Activated T-helper 2 cell treated with anti-CD3 and anti-CD28 coated beads, Interferon-gamma antibody, Interleukin-2, Interleukin-4, amounts not matched to agents 10 μg/mL and 5 μg/mL and 100 μg/mL, durations not matched to agents 14 hours and 24 hours and 36 hours (primary cell): ENCODE measurements at regions of chr1 and their contacts with region 1.

Region 1: DNA sequence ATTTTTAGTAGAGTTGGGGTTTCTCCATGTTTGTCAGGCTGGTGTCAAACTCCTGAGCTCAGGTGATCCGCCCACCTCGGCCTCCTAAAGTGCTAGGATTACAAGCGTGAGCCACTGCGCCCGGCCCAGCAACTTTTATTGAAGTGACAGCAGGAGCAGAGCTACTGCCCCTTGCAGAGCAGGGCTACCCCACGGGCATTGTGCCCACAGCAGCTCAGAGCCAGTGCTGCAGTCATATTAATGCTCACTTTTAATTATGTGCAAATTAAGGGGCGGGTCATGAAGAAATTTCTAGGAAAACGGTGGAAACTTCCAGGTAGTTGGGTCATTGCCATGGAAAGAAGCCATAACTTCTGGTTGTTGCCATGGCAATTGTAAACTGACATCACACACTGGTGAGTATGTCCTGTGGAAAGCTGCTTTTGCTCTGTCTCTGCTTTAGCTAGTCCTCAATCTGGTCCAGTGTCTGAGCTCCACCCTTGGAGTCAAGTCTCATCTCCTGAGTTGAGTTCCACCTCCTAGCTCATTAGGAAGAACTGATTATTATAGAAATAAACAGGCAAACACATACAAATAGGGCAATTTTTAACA is 127.3 kb upstream of the ADGRL4 start:
- DNase-seq: no peak
- H3K4me3 Mint-ChIP-seq: no peak overlapping the region
- H3K27ac Mint-ChIP-seq: no peak overlapping the region
- H3K4me1 Mint-ChIP-seq: no peaks in the 10 kb centered on the region
- H3K27me3 Mint-ChIP-seq: no peaks in the 10 kb centered on the region

Region 2: DNA sequence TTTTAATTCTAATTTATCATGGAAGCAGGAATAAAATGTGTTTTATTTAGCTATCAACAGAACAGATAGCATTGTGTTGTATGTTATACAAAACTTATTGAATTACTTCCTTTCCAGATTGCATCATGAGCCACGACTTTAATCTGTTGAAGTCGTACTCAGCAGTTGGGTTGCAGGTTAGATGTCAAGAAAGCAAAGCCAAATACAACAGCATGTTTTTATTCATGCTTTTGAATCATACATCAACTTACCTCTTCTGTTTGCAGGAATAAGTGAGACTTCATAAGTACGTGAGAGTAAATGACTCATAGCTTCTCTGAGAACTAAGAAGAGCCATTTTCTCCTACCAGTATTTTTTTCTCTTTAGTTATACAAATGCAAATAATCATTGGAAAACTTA is 16.5 kb before region 1 on chr1:
- intact Hi-C with region 1: no loop called
- DNase-seq: no peak
- H3K4me3 Mint-ChIP-seq: no peak overlapping the region
- H3K27ac Mint-ChIP-seq: no peak overlapping the region
- H3K4me1 Mint-ChIP-seq: no peaks in the 10 kb centered on the region
- H3K27me3 Mint-ChIP-seq: no peaks in the 10 kb centered on the region

Region 3: GRCh38 chr1:79180081-79180480 is 46.2 kb after region 1 on chr1:
- intact Hi-C with region 1: loop called (anchors 5 kb)
- DNase-seq: no peak
- H3K4me3 Mint-ChIP-seq: no peak overlapping the region
- H3K27ac Mint-ChIP-seq: no peak overlapping the region
- H3K4me1 Mint-ChIP-seq: no peaks in the 10 kb centered on the region
- H3K27me3 Mint-ChIP-seq: no peaks in the 10 kb centered on the region